ENCODE measurements at regions of chr6 and their contacts with region 1.

Region 1: DNA sequence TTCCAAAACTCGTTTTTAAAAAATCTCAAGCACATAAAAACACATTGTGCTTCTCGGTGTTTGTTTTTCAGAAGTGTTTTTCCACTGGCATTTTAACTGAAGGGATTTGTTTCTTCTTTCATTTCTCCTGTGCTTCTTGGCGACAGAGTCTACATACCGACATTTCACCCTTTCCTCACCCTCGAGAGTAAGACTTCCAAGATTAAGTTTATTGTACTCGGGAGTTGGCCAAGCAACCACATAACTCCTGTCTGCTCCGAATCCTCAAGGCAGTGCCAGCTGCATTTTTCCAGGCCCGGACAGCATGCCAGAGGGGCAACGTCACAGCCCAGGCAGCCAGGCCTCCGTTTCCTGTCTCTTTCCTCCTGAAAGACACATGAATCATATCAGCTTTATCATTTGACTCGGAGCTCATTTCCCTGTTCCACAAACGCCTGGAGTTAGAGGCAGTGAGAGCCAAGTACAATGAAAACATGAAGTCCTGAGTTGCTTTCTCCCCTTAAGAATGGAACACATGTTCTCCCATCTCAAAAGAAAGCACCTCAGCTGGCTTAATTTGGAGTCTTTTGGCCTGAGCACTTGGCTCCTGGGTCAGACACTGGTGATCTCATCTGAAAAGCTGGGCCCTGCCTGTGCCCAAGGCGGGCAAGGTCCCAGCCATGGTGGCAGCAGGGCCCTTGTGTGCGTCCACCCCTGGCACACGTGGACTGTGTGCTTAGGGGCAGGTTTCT is 23.2 kb upstream of the FAM50B start:
- DNase-seq: peak; percentile 94
- H3K4me3 ChIP-seq: peak overlapping the region; percentile 20; the same call in 1 of the 2 replicates
- H3K27ac ChIP-seq: peak overlapping the region; percentile 87
- H3K4me1 ChIP-seq: peaks cover 50% of the 10 kb centered on the region
- H3K27me3 ChIP-seq: no peaks in the 10 kb centered on the region
- CTCF ChIP-seq: no peak

Region 2: GRCh38 chr6:3750317-3751120 is 75.5 kb before region 1 on chr6:
- CTCF ChIA-PET with region 1: interaction called, 5 read pairs
- POLR2A ChIA-PET with region 1: interaction called, 5 read pairs
- intact Hi-C with region 1: loop called (anchors 1 kb)
- DNase-seq: peak; percentile 37 to 74
- H3K4me3 ChIP-seq: peak overlapping the region; percentile 69
- H3K27ac ChIP-seq: 0 out of 2 replicates have a peak overlapping the region, but pooled peaks have one; percentile 26
- H3K4me1 ChIP-seq: 0 out of 2 replicates have a peak, but pooled peaks cover 5% of the 10 kb centered on the region
- H3K27me3 ChIP-seq: no peaks in the 10 kb centered on the region
- CTCF ChIP-seq: no peak

Region 3: DNA sequence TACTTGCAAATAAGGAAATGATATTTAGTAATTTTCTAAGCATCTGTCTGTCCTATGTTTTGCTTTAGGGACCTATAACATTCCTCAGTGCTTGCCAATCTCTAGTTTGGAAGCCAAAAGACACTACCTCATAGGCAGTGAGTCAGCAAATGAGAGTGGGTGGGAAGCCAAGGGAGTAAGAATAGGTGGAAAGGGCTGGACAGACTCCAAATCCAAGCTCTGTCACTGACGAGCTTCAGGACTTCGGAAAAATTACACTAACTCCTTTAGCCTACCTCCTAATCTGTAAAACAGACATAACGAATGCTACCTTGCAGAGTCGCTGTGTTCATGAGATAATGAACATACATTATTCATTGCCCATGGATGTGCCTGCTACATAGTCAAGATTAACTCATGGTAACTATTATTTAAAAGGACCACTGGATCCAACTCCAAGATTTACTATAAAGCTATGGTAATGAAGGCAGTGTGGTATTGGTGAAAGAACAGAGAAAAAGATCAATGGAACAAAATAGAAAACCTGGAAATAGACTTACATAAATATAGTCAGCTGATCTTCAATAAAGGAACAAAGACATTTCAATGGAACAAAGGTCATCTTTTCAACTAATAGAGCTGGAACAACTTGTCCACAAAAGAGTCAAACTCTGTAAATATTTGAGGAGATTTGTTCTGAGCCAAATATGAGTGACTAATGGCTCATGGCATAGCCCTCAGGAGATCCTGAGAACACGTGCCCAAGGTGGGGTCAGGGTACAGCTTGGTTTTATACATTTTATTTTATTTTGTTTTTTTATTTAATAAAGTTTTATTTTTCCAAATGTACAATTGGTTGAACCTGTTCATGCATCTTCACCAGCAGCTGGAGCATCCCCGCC is 87.3 kb after region 1 on chr6:
- CTCF ChIA-PET with region 1: no interaction called
- POLR2A ChIA-PET with region 1: interaction called, 9 read pairs
- intact Hi-C with region 1: loop called (anchors 1 kb)
- DNase-seq: peak; percentile 74 to 95
- H3K4me3 ChIP-seq: peak overlapping the region; percentile 49; the same call in 1 of the 2 replicates
- H3K27ac ChIP-seq: peak overlapping the region; percentile 100
- H3K4me1 ChIP-seq: peaks cover 45% of the 10 kb centered on the region
- H3K27me3 ChIP-seq: no peaks in the 10 kb centered on the region
- CTCF ChIP-seq: no peak

Region 4: GRCh38 chr6:3977875-3978711 is 152.1 kb after region 1 on chr6:
- CTCF ChIA-PET with region 1: no interaction called
- POLR2A ChIA-PET with region 1: no interaction called
- intact Hi-C with region 1: loop called (anchors 5 kb)
- DNase-seq: peak; percentile 43 to 65
- H3K4me3 ChIP-seq: no peak overlapping the region
- H3K27ac ChIP-seq: no peak overlapping the region
- H3K4me1 ChIP-seq: no peaks in the 10 kb centered on the region
- H3K27me3 ChIP-seq: no peaks in the 10 kb centered on the region
- CTCF ChIP-seq: peak; percentile 73

Region 5: GRCh38 chr6:3990692-3991501 is 164.9 kb after region 1 on chr6:
- CTCF ChIA-PET with region 1: no interaction called
- POLR2A ChIA-PET with region 1: no interaction called
- intact Hi-C with region 1: loop called (anchors 2 kb)
- DNase-seq: peak; percentile 53 to 80
- H3K4me3 ChIP-seq: peak overlapping the region; percentile 39; the same call in 1 of the 2 replicates
- H3K27ac ChIP-seq: peak overlapping the region; percentile 47; the same call in 1 of the 2 replicates
- H3K4me1 ChIP-seq: peaks cover 14% of the 10 kb centered on the region
- H3K27me3 ChIP-seq: no peaks in the 10 kb centered on the region
- CTCF ChIP-seq: peak; percentile 90